AG04450 (cell line): ENCODE measurements at regions of chr3 and their contacts with region 1.

Region 1: DNA sequence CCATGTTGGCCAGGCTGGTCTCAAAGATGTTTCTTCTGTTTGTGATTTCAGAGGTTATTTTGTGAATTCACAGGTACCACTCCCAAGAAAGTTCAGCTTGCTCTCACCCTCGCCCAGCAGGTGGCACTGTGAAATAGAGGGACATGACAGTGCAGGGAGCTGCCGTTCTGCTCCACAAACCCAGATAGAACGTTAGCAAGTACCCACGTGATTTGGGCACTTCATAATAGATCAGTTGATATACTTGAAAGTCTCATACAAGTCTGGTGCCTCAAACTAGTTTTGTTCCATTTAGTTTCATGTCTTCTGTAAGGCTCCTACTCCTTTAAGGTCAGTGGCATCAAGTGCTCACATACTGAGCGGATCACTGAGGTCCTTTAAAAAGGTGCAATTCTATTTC is 45.5 kb downstream of the FILIP1L start:
- DNase-seq: peak; percentile 50
- H3K4me3 ChIP-seq: no peak overlapping the region
- H3K27ac ChIP-seq: no peak overlapping the region
- H3K27me3 ChIP-seq: no peaks in the 10 kb centered on the region
- CTCF ChIP-seq: peak; percentile 75

Region 2: GRCh38 chr3:99833617-99834205 is 235.1 kb before region 1 on chr3:
- CTCF ChIA-PET with region 1: interaction called, 10 read pairs
- POLR2A ChIA-PET with region 1: interaction called, 3 read pairs
- DNase-seq: no peak
- H3K4me3 ChIP-seq: no peak overlapping the region
- H3K27ac ChIP-seq: no peak overlapping the region
- H3K27me3 ChIP-seq: no peaks in the 10 kb centered on the region
- CTCF ChIP-seq: no peak

Region 3: GRCh38 chr3:100057716-100058575 is 10.9 kb before region 1 on chr3:
- CTCF ChIA-PET with region 1: interaction called, 12 read pairs
- POLR2A ChIA-PET with region 1: no interaction called
- DNase-seq: no peak
- H3K4me3 ChIP-seq: no peak overlapping the region
- H3K27ac ChIP-seq: no peak overlapping the region
- H3K27me3 ChIP-seq: no peaks in the 10 kb centered on the region
- CTCF ChIP-seq: no peak

Region 4: DNA sequence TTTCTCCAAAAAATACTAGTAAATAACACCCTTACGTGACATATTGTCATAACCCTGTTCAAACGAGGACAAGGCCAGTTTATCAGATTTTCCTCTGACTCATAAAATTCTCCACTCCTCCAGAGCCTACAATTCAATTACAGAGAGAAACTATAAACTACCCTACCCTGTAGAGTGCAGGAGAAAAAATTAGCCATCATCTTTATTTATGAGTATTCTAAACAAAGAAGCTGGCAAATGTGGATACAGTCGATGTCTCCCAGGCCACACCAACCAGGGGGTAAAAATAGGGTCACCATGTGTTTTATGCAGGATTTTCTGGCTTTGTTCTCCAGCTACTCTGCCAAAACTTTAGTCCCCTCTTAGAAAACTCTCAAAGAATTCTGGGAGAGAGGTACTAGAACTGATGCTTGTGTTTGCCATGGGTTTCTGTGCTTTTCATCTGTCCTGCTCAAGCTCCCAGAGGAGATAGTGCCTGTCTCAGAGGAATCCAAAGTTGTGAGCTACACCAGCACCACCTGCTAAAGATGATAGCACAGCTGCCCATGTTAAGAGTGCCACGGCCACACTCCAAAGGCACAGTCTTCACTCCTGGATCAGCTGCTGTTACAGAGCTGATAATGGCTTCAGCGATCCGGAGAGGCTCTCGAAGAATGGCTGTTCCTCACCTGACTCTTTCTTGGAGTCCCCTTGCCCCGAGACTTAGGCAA is 1101.4 kb after region 1 on chr3:
- CTCF ChIA-PET with region 1: no interaction called
- POLR2A ChIA-PET with region 1: no interaction called
- DNase-seq: no peak
- H3K4me3 ChIP-seq: no peak overlapping the region
- H3K27ac ChIP-seq: no peak overlapping the region
- H3K27me3 ChIP-seq: no peaks in the 10 kb centered on the region
- CTCF ChIP-seq: no peak